ENCODE measurements at regions of chr4 and their contacts with region 1.

Region 1: DNA sequence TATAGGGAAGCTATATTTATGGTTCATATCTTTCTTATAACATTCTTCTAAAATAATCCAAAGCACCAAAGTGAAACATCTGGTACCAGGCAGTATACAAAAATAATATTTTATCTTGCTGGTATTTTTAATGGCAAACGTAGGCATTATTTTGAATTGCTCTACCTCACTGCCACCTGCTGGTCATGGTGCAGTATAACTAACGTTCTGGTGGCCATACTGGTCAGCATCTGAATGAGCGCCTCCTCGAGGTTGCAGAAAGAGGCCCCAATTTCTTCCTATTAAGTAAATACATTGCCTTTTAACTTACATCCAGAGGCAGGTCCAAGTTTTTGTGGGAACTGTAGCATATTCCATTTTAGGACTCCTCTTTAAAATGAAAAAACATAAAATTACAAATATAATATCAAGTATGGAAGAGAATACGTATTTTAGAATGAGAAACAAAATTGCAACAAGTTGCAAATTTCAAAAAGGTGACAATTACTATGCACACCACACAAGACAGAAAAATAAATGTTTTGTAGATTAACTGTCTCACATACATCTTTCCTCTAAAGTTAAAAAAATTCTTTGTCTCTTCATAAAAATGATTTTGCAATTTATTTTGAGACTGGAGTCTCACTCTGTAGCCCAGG is 22.9 kb upstream of the CWH43 start:
- DNase-seq: peak; percentile 53 to 88 (median 75)
- ATAC-seq: peak; percentile 99
- H3K4me3 ChIP-seq: no peak overlapping the region
- H3K4me3 Mint-ChIP-seq: no peak overlapping the region
- H3K27ac ChIP-seq: no peak overlapping the region
- H3K27ac Mint-ChIP-seq: no peak overlapping the region
- H3K4me1 ChIP-seq: no peaks in the 10 kb centered on the region
- H3K4me1 Mint-ChIP-seq: peaks cover 2% of the 10 kb centered on the region
- H3K27me3 ChIP-seq: no peaks in the 10 kb centered on the region
- H3K27me3 Mint-ChIP-seq: no peaks in the 10 kb centered on the region
- CTCF ChIP-seq: peak; percentile 99

Region 2: GRCh38 chr4:48445704-48446103 is 517.5 kb before region 1 on chr4:
- CTCF ChIA-PET with region 1: no interaction called
- POLR2A ChIA-PET with region 1: no interaction called
- intact Hi-C with region 1: loop called (anchors 1 to 5 kb)
- DNase-seq: peak in 2 of 9 experiments; percentile 13 to 23
- ATAC-seq: no peak
- H3K4me3 ChIP-seq: no peak overlapping the region
- H3K4me3 Mint-ChIP-seq: no peak overlapping the region
- H3K27ac ChIP-seq: no peak overlapping the region
- H3K27ac Mint-ChIP-seq: no peak overlapping the region
- H3K4me1 ChIP-seq: no peaks in the 10 kb centered on the region
- H3K4me1 Mint-ChIP-seq: no peaks in the 10 kb centered on the region
- H3K27me3 ChIP-seq: no peaks in the 10 kb centered on the region
- H3K27me3 Mint-ChIP-seq: peaks cover 5% of the 10 kb centered on the region
- CTCF ChIP-seq: peak; percentile 69

Region 3: DNA sequence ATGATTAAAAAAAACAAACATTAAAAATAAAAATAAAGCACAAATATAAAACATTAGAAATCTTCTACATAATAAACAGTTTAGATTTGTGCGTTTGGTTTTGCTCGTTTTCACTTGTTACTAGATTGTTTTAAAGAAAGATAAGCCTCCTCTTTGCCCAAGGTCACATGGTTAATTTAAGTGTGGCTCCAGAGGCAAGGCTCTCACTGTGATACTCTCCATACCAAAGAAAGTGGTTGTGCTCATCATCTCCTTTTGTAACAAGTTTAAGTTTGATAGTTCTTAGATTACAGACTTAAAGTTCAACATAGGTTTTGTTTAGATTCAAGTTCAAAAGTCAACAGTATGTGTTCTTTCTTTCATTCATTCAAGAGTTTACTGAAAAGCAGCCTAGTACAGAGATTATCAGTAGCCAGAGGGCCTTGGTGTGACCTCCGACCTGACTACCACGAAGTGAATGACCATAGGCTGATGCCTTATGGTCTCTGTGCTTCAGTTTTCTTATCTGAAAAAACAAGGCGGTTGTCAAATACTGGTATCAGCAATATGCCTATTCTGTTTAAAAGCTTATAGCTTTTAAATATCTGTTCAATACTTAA is 339.9 kb before region 1 on chr4:
- CTCF ChIA-PET with region 1: interaction called, 5 read pairs
- POLR2A ChIA-PET with region 1: no interaction called
- intact Hi-C with region 1: loop called in 1 of 2 experiments (anchors 5 kb)
- DNase-seq: no peak
- ATAC-seq: no peak
- H3K4me3 ChIP-seq: no peak overlapping the region
- H3K4me3 Mint-ChIP-seq: no peak overlapping the region
- H3K27ac ChIP-seq: no peak overlapping the region
- H3K27ac Mint-ChIP-seq: no peak overlapping the region
- H3K4me1 ChIP-seq: no peaks in the 10 kb centered on the region
- H3K4me1 Mint-ChIP-seq: peaks cover 10% of the 10 kb centered on the region
- H3K27me3 ChIP-seq: no peaks in the 10 kb centered on the region
- H3K27me3 Mint-ChIP-seq: no peaks in the 10 kb centered on the region
- CTCF ChIP-seq: no peak

Region 4: GRCh38 chr4:48804584-48805301 is 158.4 kb before region 1 on chr4:
- CTCF ChIA-PET with region 1: no interaction called
- POLR2A ChIA-PET with region 1: no interaction called
- intact Hi-C with region 1: no loop called
- DNase-seq: no peak
- ATAC-seq: no peak
- H3K4me3 ChIP-seq: no peak overlapping the region
- H3K4me3 Mint-ChIP-seq: no peak overlapping the region
- H3K27ac ChIP-seq: no peak overlapping the region
- H3K27ac Mint-ChIP-seq: no peak overlapping the region
- H3K4me1 ChIP-seq: no peaks in the 10 kb centered on the region
- H3K4me1 Mint-ChIP-seq: no peaks in the 10 kb centered on the region
- H3K27me3 ChIP-seq: peaks cover 0 to 2% of the 10 kb centered on the region in 2 experiments
- H3K27me3 Mint-ChIP-seq: peaks cover 3% of the 10 kb centered on the region
- CTCF ChIP-seq: no peak

Region 5: DNA sequence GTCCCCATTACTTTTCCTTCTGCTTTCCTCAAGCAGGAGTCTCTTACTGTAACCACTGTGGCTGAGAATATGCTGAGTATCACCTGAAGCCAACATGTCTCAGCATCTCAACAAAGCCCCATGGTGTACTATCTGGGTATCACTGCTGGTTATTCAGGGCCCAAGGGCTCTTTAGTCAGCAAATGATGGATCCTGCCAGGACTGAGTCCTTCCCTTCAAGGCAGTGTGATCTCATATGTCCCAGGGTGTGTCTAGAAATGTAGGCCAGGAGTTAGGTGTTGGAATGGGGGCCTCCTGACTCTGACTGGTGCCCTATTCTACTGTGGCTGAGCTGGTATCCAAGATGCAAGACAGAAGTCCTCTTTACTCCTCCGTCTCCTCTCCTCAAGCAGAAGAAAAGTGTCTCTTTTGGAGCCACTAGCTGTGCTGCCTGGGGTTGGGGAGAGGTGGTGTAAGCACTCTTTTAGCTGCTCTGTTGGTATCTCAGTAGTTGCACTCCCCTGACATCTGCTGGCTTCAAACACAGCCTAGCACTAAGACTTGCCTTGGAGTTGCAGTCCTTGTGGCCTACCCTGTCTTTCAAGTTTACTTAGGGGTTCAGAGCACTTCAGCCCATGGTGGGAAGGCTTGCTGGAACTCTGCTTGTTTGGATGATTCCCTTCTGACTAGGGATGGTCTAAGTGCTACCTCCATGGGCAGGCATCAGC is 85.2 kb before region 1 on chr4:
- CTCF ChIA-PET with region 1: no interaction called
- POLR2A ChIA-PET with region 1: no interaction called
- intact Hi-C with region 1: loop called in 1 of 2 experiments (anchors 2 kb)
- DNase-seq: no peak
- ATAC-seq: no peak
- H3K4me3 ChIP-seq: no peak overlapping the region
- H3K4me3 Mint-ChIP-seq: no peak overlapping the region
- H3K27ac ChIP-seq: no peak overlapping the region
- H3K27ac Mint-ChIP-seq: no peak overlapping the region
- H3K4me1 ChIP-seq: no peaks in the 10 kb centered on the region
- H3K4me1 Mint-ChIP-seq: no peaks in the 10 kb centered on the region
- H3K27me3 ChIP-seq: no peaks in the 10 kb centered on the region
- H3K27me3 Mint-ChIP-seq: no peaks in the 10 kb centered on the region
- CTCF ChIP-seq: no peak

Region 6: DNA sequence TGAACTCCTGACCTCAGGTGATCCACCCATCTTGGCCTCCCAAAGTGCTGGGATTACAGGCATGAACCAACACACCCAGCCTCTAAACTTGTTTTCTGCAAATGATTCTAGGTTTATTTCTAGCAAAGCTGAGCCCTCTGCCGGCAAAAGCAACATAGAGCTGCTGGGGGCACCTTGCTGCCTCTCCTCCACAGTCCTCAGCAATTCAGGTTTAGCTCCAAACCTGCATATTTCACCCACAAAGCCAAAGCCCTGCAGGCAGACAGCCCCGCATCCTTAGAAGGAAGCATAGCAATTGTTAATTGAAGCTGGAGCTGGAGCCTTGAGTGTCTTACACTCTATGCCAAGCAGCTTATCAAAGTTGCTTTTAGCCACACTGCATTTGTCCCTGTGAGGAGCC is 31.7 kb before region 1 on chr4:
- CTCF ChIA-PET with region 1: interaction called, 10 read pairs
- POLR2A ChIA-PET with region 1: no interaction called
- intact Hi-C with region 1: no loop called
- DNase-seq: no peak
- ATAC-seq: no peak
- H3K4me3 ChIP-seq: no peak overlapping the region
- H3K4me3 Mint-ChIP-seq: no peak overlapping the region
- H3K27ac ChIP-seq: no peak overlapping the region
- H3K27ac Mint-ChIP-seq: no peak overlapping the region
- H3K4me1 ChIP-seq: no peaks in the 10 kb centered on the region
- H3K4me1 Mint-ChIP-seq: no peaks in the 10 kb centered on the region
- H3K27me3 ChIP-seq: no peaks in the 10 kb centered on the region
- H3K27me3 Mint-ChIP-seq: no peaks in the 10 kb centered on the region
- CTCF ChIP-seq: no peak